Activated CD8-positive, alpha-beta T cell treated with anti-CD3 and anti-CD28 coated beads, Interleukin-2, amount 10 ng/mL, durations not matched to agents 7 days and 5 days (primary cell): ENCODE measurements at regions of chr6 and their contacts with region 1.

Region 1: GRCh38 chr6:36340618-36341454 is 4.1 kb upstream of the BNIP5 start:
- DNase-seq: peak; percentile 77
- ATAC-seq: peak; percentile 80
- H3K4me3 Mint-ChIP-seq: peak overlapping the region; percentile 45
- H3K27ac Mint-ChIP-seq: no peak overlapping the region
- H3K4me1 Mint-ChIP-seq: peaks cover 11% of the 10 kb centered on the region
- H3K27me3 Mint-ChIP-seq: peaks cover 35% of the 10 kb centered on the region

Region 2: DNA sequence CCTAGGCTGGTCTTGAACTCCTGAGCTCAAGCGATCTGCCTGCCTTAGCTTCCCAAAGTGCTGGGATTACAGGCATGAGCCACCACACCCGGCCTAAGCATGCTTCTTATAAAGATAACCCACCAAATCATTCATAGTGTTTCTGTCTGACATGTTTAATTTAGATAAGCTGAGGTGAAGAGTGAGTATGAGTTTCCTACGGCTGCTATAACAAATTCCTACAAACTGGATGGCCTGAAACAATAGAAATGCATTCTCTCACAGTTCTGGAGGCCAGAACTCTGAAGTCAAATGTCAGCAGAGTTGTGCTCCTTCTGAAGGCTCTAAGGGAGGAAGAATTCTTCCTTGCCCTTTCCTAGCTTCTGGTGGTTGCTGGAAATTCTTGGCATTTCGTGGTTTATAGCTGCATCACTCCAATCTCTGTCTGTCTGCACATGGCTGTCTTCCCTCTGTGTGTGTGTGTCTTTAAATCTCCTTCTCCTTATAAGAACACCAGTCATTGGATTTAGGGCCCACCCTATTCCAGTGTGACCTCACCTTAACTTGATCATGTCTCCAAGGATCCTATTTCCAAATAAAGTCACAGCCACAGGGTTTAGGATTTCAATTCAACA is 180.6 kb before region 1 on chr6:
- CTCF ChIA-PET with region 1: no interaction called
- POLR2A ChIA-PET with region 1: no interaction called
- DNase-seq: peak; percentile 9
- ATAC-seq: no peak
- H3K4me3 Mint-ChIP-seq: no peak overlapping the region
- H3K27ac Mint-ChIP-seq: no peak overlapping the region
- H3K4me1 Mint-ChIP-seq: no peaks in the 10 kb centered on the region
- H3K27me3 Mint-ChIP-seq: no peaks in the 10 kb centered on the region

Region 3: GRCh38 chr6:36245572-36246061 is 95.2 kb before region 1 on chr6:
- CTCF ChIA-PET with region 1: no interaction called
- POLR2A ChIA-PET with region 1: no interaction called
- DNase-seq: peak; percentile 34
- ATAC-seq: peak; percentile 27
- H3K4me3 Mint-ChIP-seq: no peak overlapping the region
- H3K27ac Mint-ChIP-seq: no peak overlapping the region
- H3K4me1 Mint-ChIP-seq: peaks cover 20% of the 10 kb centered on the region
- H3K27me3 Mint-ChIP-seq: peaks cover 14% of the 10 kb centered on the region

Region 4: GRCh38 chr6:36319436-36319762 is 21.4 kb before region 1 on chr6:
- CTCF ChIA-PET with region 1: interaction called, 18 read pairs
- POLR2A ChIA-PET with region 1: interaction called, 3 read pairs
- DNase-seq: no peak
- ATAC-seq: no peak
- H3K4me3 Mint-ChIP-seq: no peak overlapping the region
- H3K27ac Mint-ChIP-seq: no peak overlapping the region
- H3K4me1 Mint-ChIP-seq: no peaks in the 10 kb centered on the region
- H3K27me3 Mint-ChIP-seq: peaks cover 22% of the 10 kb centered on the region

Region 5: GRCh38 chr6:36326356-36326995 is 14.4 kb before region 1 on chr6:
- CTCF ChIA-PET with region 1: interaction called, 14 read pairs
- POLR2A ChIA-PET with region 1: no interaction called
- DNase-seq: no peak
- ATAC-seq: no peak
- H3K4me3 Mint-ChIP-seq: no peak overlapping the region
- H3K27ac Mint-ChIP-seq: no peak overlapping the region
- H3K4me1 Mint-ChIP-seq: no peaks in the 10 kb centered on the region
- H3K27me3 Mint-ChIP-seq: peaks cover 7% of the 10 kb centered on the region

Region 6: DNA sequence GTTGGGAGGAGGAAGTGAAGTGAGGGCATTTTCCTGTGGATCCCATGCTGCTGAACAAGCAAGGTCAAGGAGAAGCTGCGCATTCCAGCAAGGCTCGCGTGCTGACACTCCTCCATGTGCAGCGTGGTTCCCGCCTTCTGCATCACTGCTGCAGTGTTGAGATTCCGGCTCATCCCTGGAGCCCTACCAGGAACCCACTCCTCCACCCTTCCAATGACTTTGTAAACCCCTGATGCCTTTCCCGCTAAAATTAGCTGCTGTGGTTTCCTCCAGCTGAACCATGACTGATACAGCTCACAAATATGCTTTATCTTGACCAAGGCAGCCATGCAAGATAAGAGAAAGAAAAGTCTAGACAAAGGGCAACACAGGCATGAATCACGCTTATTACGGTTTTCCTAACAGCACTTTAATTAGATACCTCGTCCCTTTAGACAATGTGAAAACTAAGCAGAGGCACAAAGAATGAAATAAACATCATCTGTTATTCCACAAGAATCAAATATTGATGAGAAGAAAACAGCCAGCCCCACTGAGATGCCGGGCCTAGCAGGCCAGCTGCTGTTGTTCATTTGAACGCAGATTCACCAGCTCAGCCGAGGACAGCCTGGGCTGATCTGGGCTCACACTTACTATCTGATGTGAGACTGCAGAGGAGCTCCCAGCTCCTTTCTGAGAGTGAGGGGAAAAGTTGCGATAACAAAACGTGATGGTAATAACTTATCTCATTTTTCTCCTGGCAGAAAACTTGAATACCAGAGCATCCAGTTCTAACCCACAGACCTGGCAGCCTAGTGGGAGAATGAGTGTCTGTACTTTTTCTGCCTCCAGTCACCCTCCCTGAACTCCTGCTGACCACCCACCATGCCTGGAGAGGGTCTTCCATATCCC is 10.1 kb after region 1 on chr6:
- CTCF ChIA-PET with region 1: interaction called, 27 read pairs
- POLR2A ChIA-PET with region 1: no interaction called
- DNase-seq: no peak
- ATAC-seq: no peak
- H3K4me3 Mint-ChIP-seq: no peak overlapping the region
- H3K27ac Mint-ChIP-seq: no peak overlapping the region
- H3K4me1 Mint-ChIP-seq: no peaks in the 10 kb centered on the region
- H3K27me3 Mint-ChIP-seq: peaks cover 19% of the 10 kb centered on the region

Region 7: DNA sequence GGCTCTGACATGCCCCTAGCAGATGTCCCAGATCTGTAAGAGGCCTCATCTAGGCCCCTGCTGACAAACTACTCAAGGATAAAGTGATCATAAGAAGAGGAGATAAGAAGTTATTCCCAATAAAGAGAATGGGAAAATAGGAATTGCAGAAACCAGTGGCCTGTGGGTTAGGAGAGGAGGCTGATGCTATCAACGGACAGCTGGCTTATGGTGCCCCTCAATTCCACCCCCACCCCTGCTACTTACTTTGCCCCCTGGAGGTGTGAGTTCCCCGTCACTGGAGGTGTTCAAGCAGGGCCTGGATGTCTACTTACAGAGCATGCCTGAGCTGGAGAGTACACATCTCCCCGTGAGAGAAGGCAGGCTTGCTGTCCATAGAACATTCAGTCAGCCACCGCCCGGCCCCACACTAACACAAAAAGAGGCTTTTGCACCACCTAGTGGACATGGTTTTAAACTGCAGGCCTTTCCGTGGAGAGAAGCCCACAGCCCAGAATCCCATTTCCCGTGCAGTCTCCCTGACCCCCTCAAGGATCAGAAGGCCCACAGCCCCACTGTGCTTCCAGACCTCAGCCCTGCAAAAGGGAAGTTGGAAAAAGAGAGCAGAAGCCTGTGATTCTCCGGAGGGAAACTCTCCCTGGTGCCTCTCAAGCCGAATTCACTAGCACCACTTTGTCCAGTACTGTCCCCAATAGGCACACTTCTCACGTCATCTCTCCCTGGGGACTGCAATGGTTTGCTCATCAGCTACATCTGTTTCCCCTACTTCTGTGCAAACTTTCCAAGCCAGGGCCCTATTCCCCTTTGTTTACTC is 19.6 kb after region 1 on chr6:
- CTCF ChIA-PET with region 1: interaction called, 75 read pairs
- POLR2A ChIA-PET with region 1: interaction called, 3 read pairs
- DNase-seq: peak; percentile 83
- ATAC-seq: peak; percentile 89
- H3K4me3 Mint-ChIP-seq: no peak overlapping the region
- H3K27ac Mint-ChIP-seq: no peak overlapping the region
- H3K4me1 Mint-ChIP-seq: peaks cover 18% of the 10 kb centered on the region
- H3K27me3 Mint-ChIP-seq: peaks cover 8% of the 10 kb centered on the region